Activated T-helper 1 cell treated with anti-CD3 and anti-CD28 coated beads, Interleukin-12 subunit alpha, Interleukin-12 subunit beta, Interleukin-2, Interleukin-4 antibody, amounts not matched to agents 30 ng/mL and 10 ng/mL and 1 ng/mL, durations not matched to agents 14 hours and 24 hours and 36 hours (primary cell): ENCODE measurements at regions of chr22 and their contacts with region 1.

Region 1: DNA sequence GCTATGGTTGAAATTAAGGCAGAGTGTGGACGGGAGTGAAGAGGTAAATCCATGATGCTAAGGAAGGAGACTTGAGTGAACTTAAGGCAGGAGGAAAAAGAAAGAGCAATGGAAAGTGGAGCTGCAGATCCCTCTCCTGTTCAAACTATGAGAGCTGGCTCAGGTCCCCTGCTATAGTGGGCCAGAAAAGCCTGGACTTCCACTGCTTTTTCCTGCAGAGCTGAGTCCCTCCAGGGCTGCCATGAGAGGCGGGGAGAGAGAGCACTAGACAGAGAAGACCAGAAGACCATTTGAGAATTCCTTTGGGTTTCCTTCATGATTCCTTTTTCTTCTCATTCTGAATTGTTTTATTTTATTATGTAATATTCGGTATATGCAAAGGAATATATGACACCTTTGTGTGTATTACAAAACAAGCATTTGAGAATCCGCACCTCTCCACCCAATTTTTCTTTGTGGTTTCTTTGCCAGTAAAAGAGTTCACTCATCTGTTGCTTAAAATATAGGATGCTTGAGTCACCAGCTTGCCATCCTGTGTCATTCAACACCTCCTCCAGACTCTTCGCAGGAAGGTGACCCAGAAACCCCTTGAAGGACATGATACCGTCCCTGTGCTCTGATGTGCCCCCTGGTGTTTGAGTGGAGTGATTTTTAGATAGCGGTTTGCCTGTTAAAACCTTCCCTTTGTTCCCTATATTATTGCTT is 24.4 kb downstream of the SREBF2 start:
- DNase-seq: peak; percentile 71
- H3K4me3 Mint-ChIP-seq: peak overlapping the region; percentile 60
- H3K27ac Mint-ChIP-seq: peak overlapping the region; percentile 99
- H3K4me1 Mint-ChIP-seq: peaks cover 72% of the 10 kb centered on the region
- H3K27me3 Mint-ChIP-seq: no peaks in the 10 kb centered on the region

Region 2: GRCh38 chr22:41557401-41558240 is 299.7 kb before region 1 on chr22:
- intact Hi-C with region 1: no loop called
- DNase-seq: no peak
- H3K4me3 Mint-ChIP-seq: no peak overlapping the region
- H3K27ac Mint-ChIP-seq: no peak overlapping the region
- H3K4me1 Mint-ChIP-seq: no peaks in the 10 kb centered on the region
- H3K27me3 Mint-ChIP-seq: peaks cover 22% of the 10 kb centered on the region

Region 3: GRCh38 chr22:41688365-41689211 is 168.7 kb before region 1 on chr22 and contains the start of gene SNU13:
- intact Hi-C with region 1: loop called (anchors 1 kb)
- DNase-seq: peak; percentile 92
- H3K4me3 Mint-ChIP-seq: peak within 1 kb of the TSS; percentile 98
- H3K27ac Mint-ChIP-seq: peak within 1 kb of the TSS; percentile 98
- H3K4me1 Mint-ChIP-seq: peaks cover 17% of the 10 kb centered on the region
- H3K27me3 Mint-ChIP-seq: no peaks in the 10 kb centered on the region
- total RNA-seq, gene SNU13: 337 and 339 TPM in 2 replicates

Region 4: DNA sequence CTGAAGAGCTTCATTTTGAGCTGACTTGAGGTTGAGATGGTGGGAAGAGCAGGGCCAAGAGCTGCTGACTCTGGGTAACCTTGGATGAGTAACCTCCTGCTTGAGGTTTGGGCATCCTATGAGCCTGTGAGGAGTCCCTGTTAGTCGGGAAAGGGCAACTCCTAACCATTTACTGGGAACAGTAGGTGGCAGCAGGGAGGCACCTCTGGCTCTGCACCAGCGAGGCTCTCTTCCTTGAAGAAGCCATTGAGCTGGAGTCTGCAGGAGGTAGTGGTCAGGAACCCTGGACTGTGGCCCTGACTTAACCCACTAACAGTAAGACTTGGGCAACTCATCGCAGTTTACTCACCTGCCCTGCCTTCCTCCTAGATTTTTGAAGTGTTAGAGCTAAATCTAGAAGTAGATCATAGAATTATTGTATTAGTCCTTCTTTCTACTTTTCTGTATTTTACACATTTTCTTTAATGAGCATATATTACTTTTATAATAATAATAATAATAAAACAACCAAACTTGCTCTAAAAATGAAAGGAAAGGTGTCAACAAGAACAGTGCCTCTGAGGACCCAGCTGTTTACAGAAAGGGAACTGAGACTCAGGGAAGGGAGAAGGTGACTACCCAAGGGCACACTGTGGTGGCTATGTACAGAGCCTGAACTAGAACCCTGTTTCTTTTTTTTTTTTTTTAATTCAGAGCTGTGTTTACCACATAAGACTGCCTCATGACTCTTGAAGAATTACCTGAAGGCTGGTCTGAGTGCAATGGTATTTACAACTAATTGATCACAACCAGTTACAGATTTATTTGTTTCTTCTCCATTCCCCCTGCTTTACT is 110.5 kb before region 1 on chr22:
- intact Hi-C with region 1: loop called (anchors 1 kb)
- DNase-seq: peak; percentile 42
- H3K4me3 Mint-ChIP-seq: no peak overlapping the region
- H3K27ac Mint-ChIP-seq: no peak overlapping the region
- H3K4me1 Mint-ChIP-seq: peaks cover 8% of the 10 kb centered on the region
- H3K27me3 Mint-ChIP-seq: peaks cover 41% of the 10 kb centered on the region

Region 5: DNA sequence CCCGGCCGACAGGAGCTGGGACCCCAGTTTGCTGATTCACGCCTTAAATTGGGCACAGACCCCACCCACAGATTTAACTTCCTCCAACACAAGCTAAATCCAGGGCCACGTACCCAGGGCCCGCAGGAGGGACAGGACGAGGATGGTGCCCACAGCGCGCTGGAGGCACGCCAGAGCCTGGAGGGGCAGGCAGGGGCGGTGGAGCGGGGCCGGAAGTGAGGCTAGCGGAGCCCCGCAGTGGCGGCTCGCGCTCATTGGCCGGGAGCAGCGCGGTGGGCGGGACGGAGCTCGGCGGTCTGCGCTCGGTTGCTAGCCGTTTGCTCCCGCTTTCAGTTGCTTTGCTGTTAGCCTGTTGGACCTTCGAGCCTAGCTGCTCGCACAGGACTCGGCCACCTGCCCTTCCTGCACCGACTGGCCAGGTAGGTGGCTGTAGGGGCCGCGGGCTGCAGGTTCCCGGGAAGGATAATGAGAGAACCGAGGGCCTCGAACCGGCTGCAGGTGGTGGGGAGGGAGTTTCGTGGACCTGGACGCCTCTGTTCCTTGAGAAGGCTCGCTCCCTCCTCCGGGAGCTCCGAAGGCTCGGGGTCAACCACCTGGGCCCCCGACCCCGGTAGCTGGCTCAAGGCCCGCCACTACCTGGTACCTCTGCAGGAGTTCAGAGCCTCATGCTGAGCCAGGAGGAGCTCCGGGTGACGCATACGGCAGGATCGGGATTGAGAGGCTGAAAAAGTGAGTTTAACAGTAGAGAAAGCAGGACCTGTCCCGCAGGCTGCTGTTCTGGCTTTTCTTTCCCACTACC is 56.8 kb before region 1 on chr22 and contains the start of gene CCDC134:
- intact Hi-C with region 1: loop called (anchors 2 kb)
- DNase-seq: peak; percentile 90
- H3K4me3 Mint-ChIP-seq: peak within 1 kb of the TSS; percentile 99
- H3K27ac Mint-ChIP-seq: peak within 1 kb of the TSS; percentile 98
- H3K4me1 Mint-ChIP-seq: peaks cover 35% of the 10 kb centered on the region
- H3K27me3 Mint-ChIP-seq: no peaks in the 10 kb centered on the region
- total RNA-seq, gene CCDC134: 18.0 and 19.6 TPM in 2 replicates

Region 6: DNA sequence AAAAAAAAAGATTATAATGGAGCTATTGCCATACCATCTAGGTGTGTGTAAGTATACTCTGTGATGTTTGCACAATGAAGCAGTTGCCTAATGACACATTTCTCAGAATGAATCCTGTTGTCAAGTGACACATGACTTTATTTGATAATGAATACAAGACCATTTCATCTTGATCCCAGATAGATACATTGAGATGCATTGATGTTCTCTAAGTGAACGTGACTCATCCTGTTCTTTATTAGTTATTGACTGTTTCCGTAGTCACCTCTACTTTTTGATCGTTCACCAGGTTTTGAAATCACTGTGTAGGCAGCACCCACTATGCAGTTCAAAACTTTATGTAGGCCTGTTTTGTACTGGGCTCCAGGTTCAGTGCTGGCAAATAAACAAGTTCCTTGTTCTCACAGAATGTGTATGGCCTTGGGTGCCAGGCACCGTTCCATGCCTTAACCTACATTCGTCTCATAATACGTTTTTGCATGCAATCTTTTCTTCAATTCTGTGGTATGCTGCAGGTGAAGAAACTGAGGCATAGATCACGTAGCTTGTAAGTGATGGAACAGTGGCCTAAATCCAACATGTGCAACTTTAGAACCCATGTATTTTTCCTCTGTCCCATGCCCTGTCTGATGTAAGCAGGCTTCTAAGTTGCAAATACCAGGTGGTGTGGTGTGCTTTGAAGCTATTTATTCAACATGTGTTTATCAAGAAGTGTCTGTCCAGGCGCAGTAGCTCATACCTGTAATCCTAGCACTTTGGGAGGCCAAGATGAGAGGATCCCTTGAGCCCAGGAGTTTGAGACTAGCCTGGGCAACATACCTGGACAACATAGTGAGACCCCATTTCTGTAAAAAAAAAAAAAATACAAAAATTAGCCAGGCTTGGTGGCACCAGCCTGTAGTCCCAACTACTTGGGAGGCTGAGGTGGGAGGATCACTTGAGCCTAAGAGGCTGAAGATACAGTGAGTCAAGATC is 14.0 kb before region 1 on chr22:
- intact Hi-C with region 1: loop called (anchors 1 kb)
- DNase-seq: no peak
- H3K4me3 Mint-ChIP-seq: peak overlapping the region; percentile 24
- H3K27ac Mint-ChIP-seq: peak overlapping the region; percentile 75
- H3K4me1 Mint-ChIP-seq: peaks cover 84% of the 10 kb centered on the region
- H3K27me3 Mint-ChIP-seq: no peaks in the 10 kb centered on the region